ENCODE measurements at regions of chr19 and their contacts with region 1.

Region 1: DNA sequence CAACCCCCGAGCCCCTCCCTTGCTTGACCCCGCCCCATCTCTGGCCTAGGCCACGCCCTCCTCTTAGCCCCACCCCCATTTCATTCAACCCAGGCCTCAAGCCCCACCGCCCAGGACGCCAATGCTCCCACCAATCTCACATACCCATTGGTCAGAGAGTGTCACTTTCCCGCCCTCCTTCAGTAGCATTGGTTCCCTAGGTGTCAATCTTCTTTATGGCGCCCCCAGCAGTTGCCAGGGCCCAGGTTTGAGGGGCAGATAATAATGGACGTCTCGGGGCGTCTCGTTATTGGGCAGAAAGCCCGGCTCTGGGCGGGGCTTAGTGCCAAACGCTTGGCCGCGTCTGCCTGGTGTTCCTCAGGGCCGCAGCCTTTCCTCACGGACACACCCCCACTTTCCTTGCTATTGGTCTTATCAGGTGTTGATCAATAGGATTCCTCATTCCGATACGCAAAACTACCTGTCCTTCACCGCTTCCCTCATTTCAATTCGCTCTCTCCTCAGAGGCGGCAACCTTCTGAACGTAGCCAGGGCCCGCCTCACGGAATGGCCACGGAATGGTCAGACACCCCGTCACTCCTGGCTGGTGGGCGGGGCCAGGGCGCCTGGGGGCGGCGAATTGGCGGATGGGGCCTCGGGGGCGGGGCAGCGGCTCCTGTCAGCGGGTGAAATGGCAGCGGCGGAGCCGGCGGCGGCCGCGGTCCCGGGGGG is at the start of gene EVI5L:
- DNase-seq: peak; percentile 99 to 100 (median 99)
- ATAC-seq: peak; percentile 88
- H3K4me3 ChIP-seq: peak within 1 kb of the TSS; percentile 47
- H3K4me3 Mint-ChIP-seq: peak within 1 kb of the TSS; percentile 77 to 88 (median 84)
- H3K27ac ChIP-seq: peak within 1 kb of the TSS; percentile 50
- H3K27ac Mint-ChIP-seq: peak within 1 kb of the TSS; percentile 4 to 94 (median 84)
- H3K4me1 ChIP-seq: peaks cover 5 to 9% of the 10 kb centered on the region in 2 donors
- H3K4me1 Mint-ChIP-seq: peaks cover 5 to 25% (median 23%) of the 10 kb centered on the region in 7 donors
- H3K27me3 ChIP-seq: no peaks in the 10 kb centered on the region
- H3K27me3 Mint-ChIP-seq: peaks cover 0 to 11% (median 0%) of the 10 kb centered on the region in 5 donors
- total RNA-seq, gene EVI5L: 7.4 to 12.2 (median 11.4) TPM

Region 2: GRCh38 chr19:7460562-7460966 is 369.2 kb before region 1 on chr19:
- CTCF ChIA-PET with region 1: no interaction called
- POLR2A ChIA-PET with region 1: no interaction called
- intact Hi-C with region 1: no loop called
- DNase-seq: no peak
- ATAC-seq: no peak
- H3K4me3 ChIP-seq: no peak overlapping the region
- H3K4me3 Mint-ChIP-seq: no peak overlapping the region
- H3K27ac ChIP-seq: no peak overlapping the region
- H3K27ac Mint-ChIP-seq: peak overlapping the region in 2 of 9 donors; percentile 52 to 53
- H3K4me1 ChIP-seq: no peaks in the 10 kb centered on the region
- H3K4me1 Mint-ChIP-seq: peaks cover 0 to 12% (median 4%) of the 10 kb centered on the region in 7 donors
- H3K27me3 ChIP-seq: no peaks in the 10 kb centered on the region
- H3K27me3 Mint-ChIP-seq: no peaks in the 10 kb centered on the region

Region 3: DNA sequence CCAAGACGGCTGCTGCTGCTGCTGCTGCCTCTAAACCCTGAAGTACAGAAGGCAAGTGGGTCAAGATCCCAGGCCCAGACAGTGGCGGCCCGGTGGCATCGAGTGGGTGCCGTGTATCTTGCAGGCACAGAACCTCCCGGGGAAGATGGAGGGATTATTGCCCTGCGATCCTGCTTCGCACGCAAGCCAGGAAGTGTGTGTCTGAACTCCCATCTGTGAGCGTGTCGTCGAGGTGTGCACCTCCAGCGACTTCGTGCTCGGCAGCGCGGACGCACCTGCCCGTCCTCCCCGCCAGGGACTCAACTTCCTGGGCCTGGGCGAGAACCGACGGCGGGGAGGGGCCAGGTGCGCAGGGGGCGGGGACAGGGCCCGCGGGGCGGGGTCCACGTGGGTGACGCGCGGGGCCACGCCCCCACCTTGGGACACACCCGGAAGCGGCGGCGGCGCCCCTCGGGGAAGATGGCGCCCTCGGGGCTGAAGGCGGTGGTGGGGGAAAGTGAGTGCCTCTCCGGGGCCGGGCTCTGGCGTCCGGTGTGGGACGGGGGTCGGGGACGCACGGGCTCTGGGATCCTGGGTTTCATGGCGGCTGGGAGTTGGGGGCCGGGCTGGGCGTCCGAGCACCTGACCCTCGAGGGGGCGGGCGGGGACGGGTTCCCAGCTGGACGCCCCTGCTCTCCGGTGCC is 192.9 kb before region 1 on chr19 and contains the start of gene STXBP2:
- CTCF ChIA-PET with region 1: no interaction called
- POLR2A ChIA-PET with region 1: no interaction called
- intact Hi-C with region 1: loop called in 1 of 2 experiments (anchors 1 kb)
- DNase-seq: peak; percentile 87 to 95 (median 93)
- ATAC-seq: peak; percentile 98
- H3K4me3 ChIP-seq: peak within 1 kb of the TSS; percentile 81
- H3K4me3 Mint-ChIP-seq: peak within 1 kb of the TSS; percentile 75 to 89 (median 82)
- H3K27ac ChIP-seq: peak within 1 kb of the TSS; percentile 89
- H3K27ac Mint-ChIP-seq: peak within 1 kb of the TSS; percentile 80 to 92 (median 88)
- H3K4me1 ChIP-seq: peaks cover 10 to 20% of the 10 kb centered on the region in 2 donors
- H3K4me1 Mint-ChIP-seq: peaks cover 15 to 49% (median 31%) of the 10 kb centered on the region in 7 donors
- H3K27me3 ChIP-seq: no peaks in the 10 kb centered on the region
- H3K27me3 Mint-ChIP-seq: no peaks in the 10 kb centered on the region
- total RNA-seq, gene STXBP2: 158 to 411 (median 187) TPM

Region 4: GRCh38 chr19:7815325-7815724 is 14.4 kb before region 1 on chr19:
- CTCF ChIA-PET with region 1: no interaction called
- POLR2A ChIA-PET with region 1: no interaction called
- intact Hi-C with region 1: no loop called
- DNase-seq: peak in 4 of 9 donors; percentile 26 to 37 (median 30)
- ATAC-seq: peak; percentile 64
- H3K4me3 ChIP-seq: peak overlapping the region; percentile 24
- H3K4me3 Mint-ChIP-seq: peak overlapping the region; percentile 48 to 84 (median 66)
- H3K27ac ChIP-seq: no peak overlapping the region
- H3K27ac Mint-ChIP-seq: peak overlapping the region in 4 of 9 donors; percentile 49 to 91 (median 76)
- H3K4me1 ChIP-seq: peaks cover 9 to 14% of the 10 kb centered on the region in 2 donors
- H3K4me1 Mint-ChIP-seq: peaks cover 3 to 25% (median 20%) of the 10 kb centered on the region in 7 donors
- H3K27me3 ChIP-seq: no peaks in the 10 kb centered on the region
- H3K27me3 Mint-ChIP-seq: peaks cover 6 to 21% (median 17%) of the 10 kb centered on the region in 5 donors

Region 5: DNA sequence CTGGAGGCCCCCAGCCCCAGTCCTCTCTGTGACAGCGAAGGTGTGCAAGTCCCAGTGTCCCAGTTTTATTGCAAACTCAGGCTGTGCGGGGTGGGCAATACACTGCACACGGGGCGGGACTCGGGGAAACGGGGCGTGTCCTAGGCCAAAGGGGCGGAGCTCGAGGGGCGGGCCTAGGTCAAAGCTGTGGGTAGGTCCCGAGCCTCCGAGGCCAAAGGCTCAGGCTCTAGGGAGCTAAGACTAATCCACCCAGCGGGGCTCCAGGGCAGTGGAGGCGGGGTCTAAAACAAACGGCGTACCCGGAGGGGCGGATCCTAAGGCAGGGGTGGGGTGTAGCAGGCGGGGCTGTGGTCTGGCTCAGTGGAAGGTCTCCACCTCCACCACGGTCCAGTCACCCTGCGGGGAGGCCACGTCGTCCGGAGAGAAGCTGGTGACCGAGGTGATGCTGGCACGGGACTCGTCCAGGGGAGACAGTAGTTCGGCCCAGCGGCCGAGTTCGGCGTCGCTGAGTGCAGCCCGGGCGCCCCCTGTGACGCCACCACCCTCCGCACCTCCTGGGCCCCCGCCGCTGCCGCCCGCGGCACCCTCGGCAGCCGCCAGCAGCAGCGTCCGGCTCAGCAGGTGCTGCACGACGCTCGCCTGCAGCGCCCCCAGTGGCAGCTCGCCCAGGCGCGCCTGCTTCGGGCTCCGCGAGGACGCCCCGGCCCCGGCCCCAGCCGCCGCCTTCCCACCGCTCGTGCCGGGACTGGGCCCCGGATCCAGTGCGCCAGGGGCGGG is 39.1 kb after region 1 on chr19:
- CTCF ChIA-PET with region 1: no interaction called
- POLR2A ChIA-PET with region 1: no interaction called
- intact Hi-C with region 1: loop called (anchors 1 kb)
- DNase-seq: peak in 8 of 9 donors; percentile 51 to 95 (median 89)
- ATAC-seq: peak; percentile 83
- H3K4me3 ChIP-seq: peak overlapping the region; percentile 74
- H3K4me3 Mint-ChIP-seq: peak overlapping the region; percentile 69 to 87 (median 81)
- H3K27ac ChIP-seq: peak overlapping the region; percentile 69
- H3K27ac Mint-ChIP-seq: peak overlapping the region; percentile 34 to 90 (median 58)
- H3K4me1 ChIP-seq: peaks cover 12 to 19% of the 10 kb centered on the region in 2 donors
- H3K4me1 Mint-ChIP-seq: peaks cover 24 to 39% (median 36%) of the 10 kb centered on the region in 7 donors
- H3K27me3 ChIP-seq: peaks cover 0 to 2% of the 10 kb centered on the region in 2 donors
- H3K27me3 Mint-ChIP-seq: peaks cover 0 to 62% (median 8%) of the 10 kb centered on the region in 5 donors

Region 6: DNA sequence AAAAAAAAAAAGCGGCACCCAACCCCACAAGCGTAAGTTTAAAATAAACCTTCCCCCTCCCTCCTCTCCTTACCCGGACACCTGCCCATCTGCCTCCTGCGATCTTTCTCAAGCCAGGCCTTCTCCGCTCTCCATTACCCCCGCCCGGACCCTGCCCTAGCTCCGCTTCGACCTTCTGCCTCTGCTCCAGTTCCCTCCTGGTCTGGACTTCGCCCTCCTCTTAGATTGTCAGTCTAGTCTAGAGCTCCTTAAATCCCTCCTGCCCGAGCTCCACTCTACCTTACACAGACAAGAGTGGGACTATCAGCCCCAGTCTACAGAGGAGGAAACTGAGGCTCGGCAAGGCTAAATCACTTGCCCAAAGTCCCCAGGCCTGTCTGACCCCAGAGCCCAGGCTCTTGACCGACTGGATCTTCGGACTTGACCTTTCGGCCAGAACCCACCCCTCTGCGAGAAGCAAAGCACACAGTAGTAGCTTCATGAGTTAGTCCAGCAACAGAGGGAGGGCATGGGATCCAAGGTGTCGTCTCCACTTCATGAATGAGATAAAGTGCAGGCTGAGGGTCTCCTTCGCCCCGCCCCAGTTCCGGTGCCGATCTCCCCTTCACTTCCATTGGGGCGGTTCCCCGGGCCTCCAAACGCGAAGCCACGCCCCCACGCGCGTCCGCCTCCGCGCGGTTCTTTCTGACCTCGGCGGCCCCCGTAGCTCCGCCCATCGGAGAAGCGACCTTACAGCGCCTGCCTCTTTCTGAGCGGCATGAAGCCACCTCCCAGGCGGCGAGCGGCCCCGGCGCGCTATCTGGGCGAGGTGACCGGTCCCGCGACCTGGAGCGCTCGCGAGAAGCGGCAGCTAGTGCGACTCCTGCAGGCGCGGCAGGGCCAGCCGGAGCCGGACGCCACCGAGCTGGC is 90.1 kb after region 1 on chr19 and contains the start of gene SNAPC2:
- CTCF ChIA-PET with region 1: interaction called, 3 read pairs
- POLR2A ChIA-PET with region 1: no interaction called
- intact Hi-C with region 1: loop called (anchors 1 kb)
- DNase-seq: peak; percentile 95 to 99 (median 98)
- ATAC-seq: peak; percentile 71
- H3K4me3 ChIP-seq: peak within 1 kb of the TSS; percentile 86
- H3K4me3 Mint-ChIP-seq: peak within 1 kb of the TSS; percentile 88 to 97 (median 94)
- H3K27ac ChIP-seq: peak within 1 kb of the TSS; percentile 75
- H3K27ac Mint-ChIP-seq: peak within 1 kb of the TSS; percentile 76 to 97 (median 92)
- H3K4me1 ChIP-seq: peaks cover 25 to 34% of the 10 kb centered on the region in 2 donors
- H3K4me1 Mint-ChIP-seq: peaks cover 15 to 52% (median 38%) of the 10 kb centered on the region in 7 donors
- H3K27me3 ChIP-seq: peaks cover 3 to 20% of the 10 kb centered on the region in 2 donors
- H3K27me3 Mint-ChIP-seq: peaks cover 12 to 33% (median 14%) of the 10 kb centered on the region in 5 donors
- total RNA-seq, gene SNAPC2: 12.3 to 24.4 (median 21.4) TPM

Region 7: DNA sequence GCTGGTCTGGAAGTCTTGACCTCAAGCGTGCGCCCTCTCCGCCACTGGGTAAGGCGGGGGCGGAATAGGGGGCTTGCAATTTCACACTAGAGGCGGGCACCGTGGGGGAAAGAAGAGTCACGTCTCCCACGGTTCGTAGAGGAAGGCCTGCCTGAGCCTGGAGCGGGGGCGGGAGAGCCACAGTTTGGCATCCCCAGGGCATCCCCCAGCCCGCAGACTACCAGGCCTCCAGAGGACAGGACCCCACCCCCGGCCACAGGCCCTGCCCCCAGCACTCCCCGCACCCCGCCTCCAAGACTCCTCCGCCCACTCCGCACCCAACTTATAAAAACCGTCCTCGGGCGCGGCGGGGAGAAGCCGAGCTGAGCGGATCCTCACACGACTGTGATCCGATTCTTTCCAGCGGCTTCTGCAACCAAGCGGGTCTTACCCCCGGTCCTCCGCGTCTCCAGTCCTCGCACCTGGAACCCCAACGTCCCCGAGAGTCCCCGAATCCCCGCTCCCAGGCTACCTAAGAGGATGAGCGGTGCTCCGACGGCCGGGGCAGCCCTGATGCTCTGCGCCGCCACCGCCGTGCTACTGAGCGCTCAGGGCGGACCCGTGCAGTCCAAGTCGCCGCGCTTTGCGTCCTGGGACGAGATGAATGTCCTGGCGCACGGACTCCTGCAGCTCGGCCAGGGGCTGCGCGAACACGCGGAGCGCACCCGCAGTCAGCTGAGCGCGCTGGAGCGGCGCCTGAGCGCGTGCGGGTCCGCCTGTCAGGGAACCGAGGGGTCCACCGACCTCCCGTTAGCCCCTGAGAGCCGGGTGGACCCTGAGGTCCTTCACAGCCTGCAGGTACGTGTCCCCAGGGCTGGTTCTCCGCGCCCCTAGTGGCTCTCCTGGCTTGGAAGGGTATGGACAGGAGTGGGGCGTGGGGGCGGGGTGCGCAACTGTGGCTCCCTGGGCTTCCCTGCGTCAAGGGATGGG is 534.4 kb after region 1 on chr19 and contains the start of gene ANGPTL4:
- CTCF ChIA-PET with region 1: no interaction called
- POLR2A ChIA-PET with region 1: no interaction called
- intact Hi-C with region 1: no loop called
- DNase-seq: peak in 7 of 9 donors; percentile 11 to 79 (median 28)
- ATAC-seq: peak; percentile 82
- H3K4me3 ChIP-seq: peak within 1 kb of the TSS; percentile 13
- H3K4me3 Mint-ChIP-seq: peak within 1 kb of the TSS; percentile 44 to 94 (median 87)
- H3K27ac ChIP-seq: no peak within 1 kb of the TSS
- H3K27ac Mint-ChIP-seq: peak within 1 kb of the TSS in 7 of 9 donors; percentile 48 to 88 (median 57)
- H3K4me1 ChIP-seq: no peaks in the 10 kb centered on the region
- H3K4me1 Mint-ChIP-seq: peaks cover 7 to 21% (median 13%) of the 10 kb centered on the region in 7 donors
- H3K27me3 ChIP-seq: peaks cover 0 to 4% of the 10 kb centered on the region in 2 donors
- H3K27me3 Mint-ChIP-seq: peaks cover 33 to 48% (median 38%) of the 10 kb centered on the region in 5 donors
- total RNA-seq, gene ANGPTL4: 1.1 TPM in 1 of 5 experiments, not detected in the others